Uterus (tissue), 4 donors: ENCODE measurements at regions of chr12 and their contacts with region 1.

Region 1: GRCh38 chr12:121793838-121794533 is 498 bp upstream of the RHOF start:
- DNase-seq: peak; percentile 90 to 94
- H3K4me3 ChIP-seq: peak overlapping the region; percentile 42 to 44
- H3K27ac ChIP-seq: peak overlapping the region; percentile 100
- H3K4me1 ChIP-seq: peaks cover 33 to 47% of the 10 kb centered on the region in 2 donors
- H3K27me3 ChIP-seq: no peaks in the 10 kb centered on the region
- CTCF ChIP-seq: peak; percentile 99 to 100 (median 100)
- POLR2A ChIP-seq: peak; percentile 25 to 54

Region 2: DNA sequence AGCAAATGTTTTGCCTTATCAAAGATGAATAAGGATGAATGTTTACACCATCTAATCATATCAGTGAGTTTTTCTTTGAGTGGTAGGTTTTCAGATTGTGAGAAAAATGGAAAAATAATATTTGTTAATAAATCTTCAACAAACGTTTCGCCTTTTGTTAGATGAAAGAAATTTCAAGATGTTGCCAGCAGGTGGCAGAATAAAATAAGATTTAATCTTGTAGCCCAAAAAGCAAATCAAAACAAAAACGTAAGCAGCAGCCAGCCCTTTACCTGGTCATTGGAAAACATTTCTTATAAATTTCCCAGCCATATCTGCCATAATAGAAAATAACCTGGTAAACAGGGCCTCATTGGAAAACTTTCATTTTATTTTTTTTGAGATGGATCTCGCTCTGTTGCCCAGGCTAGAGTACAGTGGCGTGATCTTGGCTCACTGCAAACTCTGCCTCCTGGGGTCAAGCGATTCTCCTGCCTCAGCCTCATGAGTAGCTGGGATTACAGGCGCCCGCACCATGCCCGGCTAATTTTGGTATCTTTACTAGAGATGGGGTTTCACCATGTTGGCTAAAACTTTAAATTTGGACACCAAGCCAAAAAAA is 96.8 kb before region 1 on chr12:
- intact Hi-C with region 1: loop called (anchors 5 kb)
- DNase-seq: no peak
- H3K4me3 ChIP-seq: no peak overlapping the region
- H3K27ac ChIP-seq: no peak overlapping the region
- H3K4me1 ChIP-seq: no peaks in the 10 kb centered on the region
- H3K27me3 ChIP-seq: no peaks in the 10 kb centered on the region
- CTCF ChIP-seq: peak; percentile 58 to 81 (median 70)
- POLR2A ChIP-seq: no peak

Region 3: GRCh38 chr12:121708313-121709063 is 85.5 kb before region 1 on chr12:
- intact Hi-C with region 1: no loop called
- DNase-seq: no peak
- H3K4me3 ChIP-seq: no peak overlapping the region
- H3K27ac ChIP-seq: no peak overlapping the region
- H3K4me1 ChIP-seq: peaks cover 0 to 4% of the 10 kb centered on the region in 2 donors
- H3K27me3 ChIP-seq: no peaks in the 10 kb centered on the region
- CTCF ChIP-seq: no peak
- POLR2A ChIP-seq: no peak

Region 4: GRCh38 chr12:121811434-121812319 is 17.7 kb after region 1 on chr12:
- intact Hi-C with region 1: loop called (anchors 1 kb)
- DNase-seq: peak; percentile 69 to 80
- H3K4me3 ChIP-seq: peak overlapping the region; percentile 43 to 63
- H3K27ac ChIP-seq: peak overlapping the region; percentile 78 to 86
- H3K4me1 ChIP-seq: peaks cover 9 to 31% of the 10 kb centered on the region in 2 donors
- H3K27me3 ChIP-seq: no peaks in the 10 kb centered on the region
- CTCF ChIP-seq: peak; percentile 95 to 100 (median 97)
- POLR2A ChIP-seq: peak in 1 of 2 donors; percentile 22